CD4-positive, alpha-beta memory T cell (primary cell): ENCODE measurements at regions of chr10 and their contacts with region 1.

Region 1: GRCh38 chr10:62732841-62733653 is 71.5 kb upstream of the ADO start:
- DNase-seq: peak; percentile 76 to 87 (median 81)
- H3K4me3 ChIP-seq: no peak overlapping the region
- H3K4me3 Mint-ChIP-seq: peak overlapping the region in 5 of 8 donors; percentile 26 to 75 (median 42)
- H3K27ac ChIP-seq: peak overlapping the region; percentile 60
- H3K27ac Mint-ChIP-seq: peak overlapping the region in 2 of 7 donors; percentile 65 to 92
- H3K4me1 ChIP-seq: peaks cover 59% of the 10 kb centered on the region
- H3K4me1 Mint-ChIP-seq: peaks cover 5 to 15% (median 13%) of the 10 kb centered on the region in 4 donors
- H3K27me3 ChIP-seq: no peaks in the 10 kb centered on the region
- H3K27me3 Mint-ChIP-seq: peaks cover 0 to under 1% of the 10 kb centered on the region in 2 donors

Region 2: DNA sequence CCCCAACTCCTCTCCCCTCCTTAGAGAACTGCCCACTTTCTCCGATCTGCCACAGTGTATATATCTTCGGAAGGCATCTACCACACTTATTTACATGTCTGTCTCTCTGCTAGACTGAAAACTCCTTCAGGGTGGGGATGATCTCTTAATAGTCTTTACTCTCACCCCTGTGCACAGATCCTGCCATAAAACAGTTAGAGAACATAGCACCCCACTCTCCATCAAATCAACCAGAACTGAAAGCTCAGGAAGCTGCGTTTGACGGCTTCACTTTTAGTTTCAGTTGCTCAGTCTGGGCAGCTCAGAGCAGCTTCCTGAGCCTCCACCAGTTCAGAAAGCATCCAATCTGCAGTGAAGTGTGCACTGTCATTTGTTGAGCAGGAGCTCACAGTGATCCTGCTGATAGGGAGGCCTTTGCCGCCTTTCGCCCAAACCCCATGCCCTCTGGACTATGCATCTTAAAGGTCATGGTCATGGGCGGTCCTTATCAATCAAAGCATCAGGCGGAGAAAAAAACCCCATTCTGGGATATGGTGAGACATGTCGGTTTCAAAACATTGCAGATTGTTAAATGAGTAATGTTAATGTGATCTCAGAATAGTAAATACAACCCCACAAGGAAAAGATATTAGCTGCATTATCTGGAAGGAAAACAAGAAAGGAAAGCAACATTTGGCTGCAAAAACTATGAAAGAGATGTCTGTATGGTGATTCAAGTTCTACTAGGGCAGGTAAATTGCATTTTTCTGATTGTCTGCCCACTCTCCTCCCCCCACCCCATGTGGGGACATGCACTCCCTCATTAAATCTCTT is 95.6 kb before region 1 on chr10:
- CTCF ChIA-PET with region 1: interaction called, 10 read pairs
- POLR2A ChIA-PET with region 1: interaction called, 20 read pairs
- intact Hi-C with region 1: loop called (anchors 1 kb)
- DNase-seq: peak; percentile 72 to 83 (median 75)
- H3K4me3 ChIP-seq: peak overlapping the region; percentile 31 to 34
- H3K4me3 Mint-ChIP-seq: no peak overlapping the region
- H3K27ac ChIP-seq: peak overlapping the region; percentile 78
- H3K27ac Mint-ChIP-seq: no peak overlapping the region
- H3K4me1 ChIP-seq: peaks cover 41% of the 10 kb centered on the region
- H3K4me1 Mint-ChIP-seq: peaks cover 6 to 22% (median 16%) of the 10 kb centered on the region in 4 donors
- H3K27me3 ChIP-seq: no peaks in the 10 kb centered on the region
- H3K27me3 Mint-ChIP-seq: no peaks in the 10 kb centered on the region

Region 3: GRCh38 chr10:62748386-62748785 is 15.3 kb after region 1 on chr10:
- CTCF ChIA-PET with region 1: interaction called, 8 read pairs
- POLR2A ChIA-PET with region 1: interaction called, 10 read pairs
- intact Hi-C with region 1: loop called (anchors 2 kb)
- DNase-seq: no peak
- H3K4me3 ChIP-seq: no peak overlapping the region
- H3K4me3 Mint-ChIP-seq: peak overlapping the region in 1 of 8 donors; percentile 2
- H3K27ac ChIP-seq: no peak overlapping the region
- H3K27ac Mint-ChIP-seq: peak overlapping the region in 1 of 7 donors; percentile 30
- H3K4me1 ChIP-seq: peaks cover 17% of the 10 kb centered on the region
- H3K4me1 Mint-ChIP-seq: peaks cover 11 to 27% (median 15%) of the 10 kb centered on the region in 4 donors
- H3K27me3 ChIP-seq: no peaks in the 10 kb centered on the region
- H3K27me3 Mint-ChIP-seq: no peaks in the 10 kb centered on the region

Region 4: GRCh38 chr10:62779487-62780248 is 46.6 kb after region 1 on chr10:
- CTCF ChIA-PET with region 1: interaction called, 3 read pairs
- POLR2A ChIA-PET with region 1: interaction called, 32 read pairs
- intact Hi-C with region 1: loop called (anchors 1 kb)
- DNase-seq: peak; percentile 84 to 96 (median 90)
- H3K4me3 ChIP-seq: no peak overlapping the region
- H3K4me3 Mint-ChIP-seq: peak overlapping the region in 5 of 8 donors; percentile 33 to 75 (median 66)
- H3K27ac ChIP-seq: peak overlapping the region; percentile 32
- H3K27ac Mint-ChIP-seq: peak overlapping the region; percentile 57 to 94 (median 79)
- H3K4me1 ChIP-seq: peaks cover 20% of the 10 kb centered on the region
- H3K4me1 Mint-ChIP-seq: peaks cover 13 to 20% (median 16%) of the 10 kb centered on the region in 4 donors
- H3K27me3 ChIP-seq: no peaks in the 10 kb centered on the region
- H3K27me3 Mint-ChIP-seq: no peaks in the 10 kb centered on the region

Region 5: DNA sequence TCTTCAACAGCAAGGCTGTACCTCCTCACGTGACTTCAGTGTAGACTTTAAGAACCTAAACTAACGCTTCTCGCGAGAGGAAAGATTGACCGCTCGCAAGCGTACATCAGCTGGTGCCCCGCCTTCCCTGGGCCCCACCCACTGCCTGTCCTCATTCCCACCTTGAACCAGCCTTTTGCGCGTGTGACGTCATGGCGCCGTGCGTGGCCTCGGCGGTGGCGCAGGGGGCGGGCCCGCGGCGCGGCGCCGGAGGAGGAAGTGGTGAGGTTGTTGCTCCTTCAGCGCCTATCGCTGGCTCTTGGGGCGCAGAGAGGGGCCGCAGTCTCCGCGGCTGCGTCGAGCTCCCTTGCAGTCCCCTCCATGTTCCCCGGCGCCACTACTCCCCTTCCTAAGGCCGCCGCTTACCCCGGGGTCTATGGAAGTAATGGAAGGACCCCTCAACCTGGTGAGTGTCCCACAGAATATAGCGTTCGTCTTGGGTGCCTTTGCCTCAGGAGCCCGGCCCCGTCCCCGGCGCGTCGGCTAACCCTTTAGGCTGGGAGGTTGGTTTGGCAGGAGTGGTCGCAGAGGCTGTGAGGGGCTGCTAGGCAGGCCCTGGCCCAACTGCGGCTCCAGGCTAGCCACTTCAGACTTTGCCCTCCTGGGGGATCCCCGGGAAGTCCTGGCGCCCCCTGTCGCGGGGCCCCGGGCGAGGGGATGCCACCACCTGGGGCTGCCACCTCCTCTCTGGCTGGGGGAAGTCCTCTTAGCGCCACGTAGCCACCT is 400.2 kb after region 1 on chr10 and contains the start of gene NRBF2:
- CTCF ChIA-PET with region 1: no interaction called
- POLR2A ChIA-PET with region 1: interaction called, 3 read pairs
- intact Hi-C with region 1: loop called (anchors 1 kb)
- DNase-seq: peak; percentile 97 to 98 (median 98)
- H3K4me3 ChIP-seq: peak within 1 kb of the TSS; percentile 81 to 88
- H3K4me3 Mint-ChIP-seq: peak within 1 kb of the TSS; percentile 92 to 95 (median 92)
- H3K27ac ChIP-seq: peak within 1 kb of the TSS; percentile 96
- H3K27ac Mint-ChIP-seq: peak within 1 kb of the TSS; percentile 92 to 98 (median 97)
- H3K4me1 ChIP-seq: peaks cover 46% of the 10 kb centered on the region
- H3K4me1 Mint-ChIP-seq: peaks cover 24 to 45% (median 35%) of the 10 kb centered on the region in 4 donors
- H3K27me3 ChIP-seq: no peaks in the 10 kb centered on the region
- H3K27me3 Mint-ChIP-seq: peaks cover 0 to 7% of the 10 kb centered on the region in 2 donors
- total RNA-seq, gene NRBF2: 17.8 to 18.2 TPM